Mammary epithelial cell (primary cell): ENCODE measurements at regions of chr5 and their contacts with region 1.

Region 1: DNA sequence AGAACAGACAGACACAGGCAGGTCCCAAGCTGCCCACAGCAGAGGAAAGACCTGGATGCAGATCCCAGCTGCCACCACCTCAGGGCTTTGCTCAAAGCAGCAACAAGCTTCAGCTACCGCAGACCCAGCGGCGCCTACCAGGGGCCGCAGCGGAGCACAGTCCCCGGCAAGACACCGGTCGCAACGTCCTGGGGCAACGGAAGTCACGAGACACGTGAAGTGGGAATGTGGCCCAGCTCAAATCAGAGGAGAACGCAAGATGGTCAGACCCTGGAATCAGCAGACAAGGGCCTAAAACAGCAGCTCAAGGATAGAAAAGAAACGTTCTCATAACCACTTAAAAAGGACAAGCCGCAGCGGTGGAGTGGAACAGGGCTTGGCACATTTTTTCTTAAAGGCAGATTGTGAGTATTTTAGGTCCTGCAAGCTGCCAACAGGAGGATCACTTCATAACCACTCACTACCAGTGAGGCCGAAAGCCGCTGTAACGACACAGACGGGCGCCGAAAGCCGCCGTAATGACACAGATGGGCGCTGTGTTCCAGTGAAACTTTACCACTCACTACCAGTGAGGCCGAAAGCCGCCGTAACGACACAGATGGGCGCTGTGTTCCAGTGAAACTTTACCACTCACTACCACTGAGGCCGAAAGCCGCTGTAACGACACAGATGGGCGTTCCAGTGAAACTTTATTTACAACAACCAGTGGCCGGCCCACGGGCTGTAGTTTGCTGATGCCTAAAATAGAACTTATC is 21.7 kb downstream of the SLC9A3 start:
- DNase-seq: no peak
- H3K4me3 ChIP-seq: no peak overlapping the region
- H3K27ac ChIP-seq: no peak overlapping the region
- H3K4me1 ChIP-seq: no peaks in the 10 kb centered on the region
- H3K27me3 ChIP-seq: peaks cover 7% of the 10 kb centered on the region
- CTCF ChIP-seq: no peak

Region 2: GRCh38 chr5:535846-536698 is 33.6 kb after region 1 on chr5:
- CTCF ChIA-PET with region 1: no interaction called
- dilution Hi-C with region 1: no loop called
- in situ Hi-C with region 1: no loop called
- intact Hi-C with region 1: no loop called
- DNase-seq: no peak
- H3K4me3 ChIP-seq: no peak overlapping the region
- H3K27ac ChIP-seq: no peak overlapping the region
- H3K4me1 ChIP-seq: no peaks in the 10 kb centered on the region
- H3K27me3 ChIP-seq: peaks cover 21% of the 10 kb centered on the region
- CTCF ChIP-seq: no peak

Region 3: DNA sequence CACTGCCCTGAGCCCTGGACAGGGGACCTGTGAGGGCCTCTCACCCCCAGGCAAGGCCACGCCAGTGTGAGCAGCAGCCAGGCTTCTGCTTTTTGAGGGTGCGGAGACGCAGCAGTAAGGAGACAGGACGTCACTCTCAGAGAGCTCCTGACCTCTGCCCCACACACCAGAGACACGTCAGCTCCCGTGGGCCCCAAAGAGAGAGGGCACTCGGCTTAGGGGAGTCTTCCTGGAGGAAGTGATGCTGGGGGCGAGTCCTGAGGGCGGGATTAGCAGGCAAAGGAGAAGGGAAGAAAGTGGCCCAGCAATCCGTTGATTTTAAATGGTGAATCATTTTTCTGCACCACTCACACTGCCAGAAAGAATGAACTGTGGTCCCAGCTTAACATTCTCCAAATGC is 45.8 kb after region 1 on chr5:
- CTCF ChIA-PET with region 1: no interaction called
- dilution Hi-C with region 1: loop called (anchors 5 kb)
- in situ Hi-C with region 1: no loop called
- intact Hi-C with region 1: no loop called
- DNase-seq: no peak
- H3K4me3 ChIP-seq: no peak overlapping the region
- H3K27ac ChIP-seq: no peak overlapping the region
- H3K4me1 ChIP-seq: no peaks in the 10 kb centered on the region
- H3K27me3 ChIP-seq: no peaks in the 10 kb centered on the region
- CTCF ChIP-seq: no peak

Region 4: GRCh38 chr5:579746-580366 is 77.4 kb after region 1 on chr5:
- CTCF ChIA-PET with region 1: no interaction called
- dilution Hi-C with region 1: loop called (anchors 5 kb)
- in situ Hi-C with region 1: no loop called
- intact Hi-C with region 1: no loop called
- DNase-seq: no peak
- H3K4me3 ChIP-seq: no peak overlapping the region
- H3K27ac ChIP-seq: no peak overlapping the region
- H3K4me1 ChIP-seq: no peaks in the 10 kb centered on the region
- H3K27me3 ChIP-seq: peaks cover 2% of the 10 kb centered on the region
- CTCF ChIP-seq: no peak